ENCODE measurements at regions of chr10 and their contacts with region 1.

Region 1: DNA sequence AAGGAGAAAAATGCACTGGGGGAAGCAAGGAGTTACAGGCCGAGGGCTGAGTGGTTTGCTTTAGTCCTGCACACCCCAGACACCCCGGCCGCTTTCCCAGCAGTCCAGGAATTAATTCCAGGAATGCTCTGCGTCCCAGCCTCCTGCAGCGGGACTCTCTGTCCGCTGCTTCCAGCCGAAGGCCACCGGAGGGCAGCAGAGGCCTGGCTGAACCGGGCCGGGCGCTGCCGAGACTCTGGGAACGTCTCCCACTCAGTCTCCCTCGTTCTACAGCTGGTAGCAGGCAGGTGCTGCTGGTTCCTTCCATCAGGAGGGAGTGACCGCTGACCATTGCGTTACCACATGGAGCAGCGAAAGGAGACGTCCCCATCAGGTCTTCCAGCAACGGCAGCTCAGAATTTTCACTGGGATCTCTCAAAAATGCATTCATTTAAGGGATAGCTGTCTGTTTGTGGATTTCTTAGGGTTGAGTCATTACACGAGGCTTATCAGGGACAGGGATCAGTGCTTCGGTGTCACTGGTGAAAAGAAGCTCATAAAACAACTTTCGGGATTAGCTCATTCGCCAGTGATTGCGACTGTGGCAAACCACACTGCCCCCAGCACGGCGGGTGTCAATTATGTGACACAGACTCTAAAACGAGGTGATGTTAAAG is 24.9 kb upstream of the PITRM1 start:
- DNase-seq: peak; percentile 94
- ATAC-seq: peak; percentile 88
- H3K4me3 Mint-ChIP-seq: peak overlapping the region; percentile 28
- H3K27ac Mint-ChIP-seq: no peak overlapping the region
- H3K4me1 Mint-ChIP-seq: peaks cover 12% of the 10 kb centered on the region
- H3K27me3 Mint-ChIP-seq: peaks cover 53% of the 10 kb centered on the region
- CTCF ChIP-seq: peak; percentile 73

Region 2: DNA sequence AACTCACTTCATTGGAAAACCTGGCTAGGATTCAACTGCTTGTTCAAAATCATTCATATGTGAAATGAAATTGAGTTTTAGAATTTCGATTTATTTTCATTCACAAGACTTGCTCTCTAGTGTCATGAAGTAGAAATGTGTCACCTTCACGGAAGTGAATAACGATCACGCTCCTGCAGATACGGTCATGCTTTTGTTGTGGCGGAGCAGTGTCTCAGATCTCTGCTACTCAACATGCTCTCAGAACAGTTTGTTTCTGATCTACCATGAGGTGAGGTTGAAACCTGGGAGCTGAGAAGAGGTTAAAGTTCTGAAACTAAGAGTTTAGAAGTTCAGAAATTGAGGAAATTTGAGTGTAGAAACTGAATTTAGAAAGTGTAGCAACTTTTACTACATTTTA is 11.1 kb before region 1 on chr10:
- CTCF ChIA-PET with region 1: interaction called, 31 read pairs
- POLR2A ChIA-PET with region 1: interaction called, 5 read pairs
- intact Hi-C with region 1: no loop called
- DNase-seq: peak; percentile 78
- ATAC-seq: peak; percentile 99
- H3K4me3 Mint-ChIP-seq: no peak overlapping the region
- H3K27ac Mint-ChIP-seq: peak overlapping the region; percentile 52
- H3K4me1 Mint-ChIP-seq: peaks cover 14% of the 10 kb centered on the region
- H3K27me3 Mint-ChIP-seq: peaks cover 11% of the 10 kb centered on the region
- CTCF ChIP-seq: no peak

Region 3: DNA sequence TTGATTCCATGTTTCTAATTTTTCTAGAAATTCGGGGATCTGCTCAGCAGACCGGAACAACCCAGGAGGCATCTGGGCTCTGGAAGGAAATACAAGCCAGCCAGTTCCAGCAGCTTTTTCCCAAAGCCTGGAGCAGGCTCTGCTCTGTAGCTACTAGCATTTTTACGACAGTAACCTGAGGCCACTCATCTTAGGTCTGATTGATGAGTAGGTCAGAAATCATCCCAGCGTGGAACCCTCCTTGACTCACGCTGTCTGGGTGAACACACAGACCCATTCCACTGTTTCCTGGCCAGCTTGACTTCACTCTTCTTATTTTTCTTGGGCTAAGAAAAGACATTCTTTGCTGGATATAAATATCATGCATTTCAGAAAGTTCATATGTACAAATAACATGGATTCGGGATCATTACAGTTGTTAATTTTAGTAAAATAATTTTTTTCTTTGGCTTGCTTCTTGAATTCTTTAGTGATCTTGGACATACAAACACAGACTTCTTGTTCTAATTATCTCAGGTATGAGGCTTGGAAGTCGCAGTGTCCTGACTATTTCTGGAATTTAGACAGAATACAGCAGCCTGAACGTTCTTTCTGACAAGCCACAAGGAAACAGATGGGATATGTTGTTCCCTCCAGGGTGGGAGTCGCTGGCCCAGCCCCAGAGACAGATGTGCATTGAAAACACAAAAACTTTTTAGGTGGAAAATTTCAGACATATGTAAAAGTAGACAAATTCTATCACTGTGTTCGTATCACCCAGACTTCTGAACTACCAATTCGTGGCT is 29.7 kb after region 1 on chr10:
- CTCF ChIA-PET with region 1: interaction called, 10 read pairs
- POLR2A ChIA-PET with region 1: interaction called, 3 read pairs
- intact Hi-C with region 1: loop called (anchors 5 kb)
- DNase-seq: no peak
- ATAC-seq: peak; percentile 18
- H3K4me3 Mint-ChIP-seq: no peak overlapping the region
- H3K27ac Mint-ChIP-seq: no peak overlapping the region
- H3K4me1 Mint-ChIP-seq: peaks cover 23% of the 10 kb centered on the region
- H3K27me3 Mint-ChIP-seq: no peaks in the 10 kb centered on the region
- CTCF ChIP-seq: no peak

Measured in activated CD8-positive, alpha-beta T cell treated with anti-CD3 and anti-CD28 coated beads for 36 hours (primary cell).